Posterior vena cava (tissue), 2 donors: ENCODE measurements at regions of chr19 and their contacts with region 1.

Region 1: DNA sequence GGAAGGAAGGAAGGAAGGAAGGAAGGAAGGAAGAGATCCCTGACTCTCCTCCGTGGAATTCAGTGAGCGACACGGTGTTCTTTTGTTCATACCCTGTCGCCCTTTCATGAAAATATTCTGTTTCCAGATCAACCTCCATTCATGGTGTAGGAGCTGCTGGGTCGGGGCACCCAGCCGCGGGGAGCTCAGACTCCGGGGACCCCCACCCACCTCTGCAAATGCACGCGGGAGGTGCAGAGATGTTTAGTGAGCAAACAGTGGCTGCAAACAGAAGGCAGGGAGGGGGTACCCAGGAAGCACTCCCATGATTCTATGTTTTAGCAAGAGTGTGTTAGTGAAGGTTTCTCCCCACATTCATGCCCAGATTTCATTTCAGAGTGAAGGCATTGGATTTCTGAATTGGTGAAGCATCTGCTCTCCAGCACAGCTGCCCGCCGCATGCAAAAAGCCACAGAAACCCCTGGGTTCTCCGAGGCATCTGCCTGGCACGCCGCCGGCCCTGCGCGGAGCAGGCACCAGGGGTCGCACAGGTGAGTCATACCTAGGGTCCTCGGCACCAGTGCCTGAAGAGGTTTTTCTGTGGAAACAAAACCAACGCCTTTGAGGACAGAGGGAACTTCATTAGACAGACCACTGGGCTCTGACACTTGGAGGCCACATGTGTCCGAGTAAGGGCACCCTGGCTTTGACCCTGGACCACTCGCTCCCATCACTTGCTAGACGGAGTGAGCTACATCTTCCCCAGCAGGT is 80.6 kb downstream of the ZNF557 start:
- DNase-seq: no peak

Region 2: DNA sequence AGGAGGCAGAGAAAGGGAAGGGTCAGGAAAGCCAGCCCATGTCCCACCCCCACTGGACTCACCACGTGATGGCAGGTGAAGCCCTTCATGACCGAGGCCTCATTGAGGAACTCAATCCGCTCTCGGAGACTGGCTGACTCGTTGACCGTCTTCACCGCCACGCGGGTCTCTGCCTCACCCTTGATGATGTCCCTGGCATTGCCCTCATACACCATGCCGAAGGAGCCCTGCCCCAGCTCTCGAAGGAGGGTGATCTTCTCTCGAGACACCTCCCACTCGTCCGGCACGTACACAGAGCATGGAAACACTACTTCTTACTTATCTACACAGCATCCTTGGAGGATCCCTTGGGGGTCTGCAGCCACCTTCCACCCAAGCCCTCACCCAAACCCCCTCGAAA is 24.9 kb before region 1 on chr19:
- intact Hi-C with region 1: no loop called
- DNase-seq: no peak

Region 3: GRCh38 chr19:7197760-7198696 is 47.9 kb after region 1 on chr19:
- intact Hi-C with region 1: loop called in 1 of 2 experiments (anchors 2 kb)
- DNase-seq: peak; percentile 98